Thyroid gland (tissue), 4 donors: ENCODE measurements at regions of chr3 and their contacts with region 1.

Region 1: GRCh38 chr3:140206196-140207048 is 271.4 kb downstream of the CLSTN2 start:
- DNase-seq: peak in 1 of 2 donors; percentile 12
- H3K4me3 ChIP-seq: no peak overlapping the region
- H3K27ac ChIP-seq: no peak overlapping the region
- H3K4me1 ChIP-seq: peaks cover 0 to 4% of the 10 kb centered on the region in 2 donors
- H3K27me3 ChIP-seq: no peaks in the 10 kb centered on the region
- CTCF ChIP-seq: peak in 2 of 6 experiments; percentile 17 to 22
- POLR2A ChIP-seq: no peak

Region 2: DNA sequence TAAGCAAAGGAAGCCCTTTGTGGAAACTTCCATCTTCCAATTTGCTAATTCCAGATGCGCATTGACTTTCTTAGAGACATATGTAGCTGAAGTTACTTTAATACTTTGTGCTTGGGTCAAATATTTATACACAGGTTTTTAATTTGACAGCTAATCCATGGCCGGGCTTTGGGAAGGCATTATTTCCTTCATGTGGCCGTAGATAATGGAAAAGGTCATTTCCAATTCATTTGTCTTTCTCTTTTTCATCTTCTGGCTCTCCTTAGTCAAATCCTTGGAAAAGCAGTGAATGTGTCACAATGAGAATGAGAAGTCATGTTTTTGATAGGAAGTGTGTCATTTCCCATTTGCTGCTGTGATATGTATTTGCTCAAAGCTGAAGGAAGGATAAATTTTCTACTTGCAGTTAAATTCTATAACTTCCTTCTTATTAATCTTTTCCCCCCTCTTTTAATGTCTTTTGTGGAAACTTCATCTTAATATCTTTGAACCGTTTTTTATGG is 51.9 kb after region 1 on chr3:
- intact Hi-C with region 1: loop called (anchors 2 kb)
- DNase-seq: no peak
- H3K4me3 ChIP-seq: no peak overlapping the region
- H3K27ac ChIP-seq: no peak overlapping the region
- H3K4me1 ChIP-seq: no peaks in the 10 kb centered on the region
- H3K27me3 ChIP-seq: no peaks in the 10 kb centered on the region
- CTCF ChIP-seq: no peak
- POLR2A ChIP-seq: no peak